Activated CD4-positive, alpha-beta T cell treated with anti-CD3 and anti-CD28 coated beads, Interleukin-2, amount 10 ng/mL, durations not matched to agents 24 days and 14 days (primary cell): ENCODE measurements at regions of chr15 and their contacts with region 1.

Region 1: GRCh38 chr15:64841258-64842095 is at the start of gene PLEKHO2:
- DNase-seq: peak; percentile 97
- H3K4me3 Mint-ChIP-seq: peak within 1 kb of the TSS; percentile 88
- H3K27ac Mint-ChIP-seq: peak within 1 kb of the TSS; percentile 86
- H3K4me1 Mint-ChIP-seq: peaks cover 63% of the 10 kb centered on the region
- H3K27me3 Mint-ChIP-seq: no peaks in the 10 kb centered on the region
- total RNA-seq, gene PLEKHO2: 15.7 and 16.9 TPM in 2 replicates

Region 2: GRCh38 chr15:64792282-64792681 is 49.2 kb before region 1 on chr15:
- intact Hi-C with region 1: no loop called
- DNase-seq: no peak
- H3K4me3 Mint-ChIP-seq: no peak overlapping the region
- H3K27ac Mint-ChIP-seq: no peak overlapping the region
- H3K4me1 Mint-ChIP-seq: no peaks in the 10 kb centered on the region
- H3K27me3 Mint-ChIP-seq: no peaks in the 10 kb centered on the region

Region 3: GRCh38 chr15:64825431-64826294 is 15.8 kb before region 1 on chr15 and contains the start of gene PIF1:
- intact Hi-C with region 1: loop called (anchors 2 kb)
- DNase-seq: peak; percentile 98
- H3K4me3 Mint-ChIP-seq: peak within 1 kb of the TSS; percentile 92
- H3K27ac Mint-ChIP-seq: peak within 1 kb of the TSS; percentile 93
- H3K4me1 Mint-ChIP-seq: peaks cover 37% of the 10 kb centered on the region
- H3K27me3 Mint-ChIP-seq: no peaks in the 10 kb centered on the region
- total RNA-seq, gene PIF1: 20.9 and 22.6 TPM in 2 replicates

Region 4: DNA sequence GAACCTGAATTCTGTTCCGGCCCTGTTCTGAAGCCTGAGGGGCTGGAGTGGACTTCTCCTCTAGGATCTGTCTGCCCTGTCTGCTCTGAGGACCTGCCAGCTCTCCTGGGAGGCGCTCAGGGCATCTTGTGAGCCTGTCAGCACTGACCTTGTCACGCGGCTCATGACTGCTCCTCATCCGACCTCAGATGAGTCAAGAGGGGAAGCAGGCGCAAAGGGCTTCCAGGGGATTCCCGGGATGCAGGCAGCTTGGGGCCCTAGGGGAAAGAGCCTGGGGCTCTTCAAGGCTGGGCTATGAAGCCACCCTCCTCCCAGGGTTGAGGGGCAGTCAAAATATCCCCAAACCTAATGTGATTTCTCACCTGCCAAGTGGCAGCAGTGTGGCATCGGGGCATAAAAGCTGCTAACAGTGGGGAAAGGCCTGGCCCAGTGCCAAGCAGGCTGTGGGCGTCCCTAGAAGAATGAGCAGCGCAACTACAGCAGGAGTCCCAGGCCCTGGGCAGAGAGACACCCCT is 42.6 kb after region 1 on chr15:
- intact Hi-C with region 1: loop called (anchors 2 kb)
- DNase-seq: peak; percentile 82
- H3K4me3 Mint-ChIP-seq: peak overlapping the region; percentile 80
- H3K27ac Mint-ChIP-seq: peak overlapping the region; percentile 93
- H3K4me1 Mint-ChIP-seq: peaks cover 27% of the 10 kb centered on the region
- H3K27me3 Mint-ChIP-seq: no peaks in the 10 kb centered on the region

Region 5: DNA sequence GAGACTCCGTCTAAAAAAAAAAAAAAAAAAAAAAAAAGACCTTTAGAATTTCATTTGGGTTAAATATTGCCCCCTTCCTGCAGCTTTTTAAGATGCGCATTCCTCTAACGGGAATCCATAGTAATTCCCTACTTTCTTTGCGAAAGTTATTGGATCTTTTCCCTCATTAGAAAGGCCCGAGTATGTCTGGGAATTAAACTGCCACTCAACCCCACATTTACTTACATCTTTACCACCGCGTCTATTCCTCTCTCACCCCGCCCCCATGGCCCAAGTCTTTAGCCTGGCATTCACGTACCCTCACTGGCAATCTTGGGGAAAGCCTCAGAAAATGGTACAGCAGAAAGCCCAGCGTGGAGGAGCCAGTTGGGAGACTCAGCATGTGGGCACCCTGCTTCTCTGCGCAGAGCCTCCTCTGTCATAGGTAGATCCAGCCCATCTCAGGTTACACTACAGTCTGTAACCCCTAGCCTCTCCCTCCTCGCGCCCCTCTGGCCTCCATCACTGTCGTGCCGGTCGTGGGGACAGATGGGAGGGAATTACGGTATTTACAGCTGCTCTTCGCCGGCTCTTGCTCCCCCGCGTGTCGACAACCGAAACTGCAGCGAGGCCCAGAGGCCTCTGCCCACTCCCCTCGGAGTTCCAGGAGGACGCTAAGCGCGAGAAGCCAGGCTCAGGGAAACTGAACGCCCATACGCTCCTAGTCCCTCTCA is 63.8 kb after region 1 on chr15:
- intact Hi-C with region 1: loop called (anchors 2 kb)
- DNase-seq: peak; percentile 95
- H3K4me3 Mint-ChIP-seq: peak overlapping the region; percentile 80
- H3K27ac Mint-ChIP-seq: peak overlapping the region; percentile 74
- H3K4me1 Mint-ChIP-seq: peaks cover 32% of the 10 kb centered on the region
- H3K27me3 Mint-ChIP-seq: peaks cover 14% of the 10 kb centered on the region

Region 6: GRCh38 chr15:64961013-64961412 is 119.5 kb after region 1 on chr15:
- intact Hi-C with region 1: no loop called
- DNase-seq: peak; percentile 45
- H3K4me3 Mint-ChIP-seq: no peak overlapping the region
- H3K27ac Mint-ChIP-seq: no peak overlapping the region
- H3K4me1 Mint-ChIP-seq: no peaks in the 10 kb centered on the region
- H3K27me3 Mint-ChIP-seq: no peaks in the 10 kb centered on the region

Region 7: DNA sequence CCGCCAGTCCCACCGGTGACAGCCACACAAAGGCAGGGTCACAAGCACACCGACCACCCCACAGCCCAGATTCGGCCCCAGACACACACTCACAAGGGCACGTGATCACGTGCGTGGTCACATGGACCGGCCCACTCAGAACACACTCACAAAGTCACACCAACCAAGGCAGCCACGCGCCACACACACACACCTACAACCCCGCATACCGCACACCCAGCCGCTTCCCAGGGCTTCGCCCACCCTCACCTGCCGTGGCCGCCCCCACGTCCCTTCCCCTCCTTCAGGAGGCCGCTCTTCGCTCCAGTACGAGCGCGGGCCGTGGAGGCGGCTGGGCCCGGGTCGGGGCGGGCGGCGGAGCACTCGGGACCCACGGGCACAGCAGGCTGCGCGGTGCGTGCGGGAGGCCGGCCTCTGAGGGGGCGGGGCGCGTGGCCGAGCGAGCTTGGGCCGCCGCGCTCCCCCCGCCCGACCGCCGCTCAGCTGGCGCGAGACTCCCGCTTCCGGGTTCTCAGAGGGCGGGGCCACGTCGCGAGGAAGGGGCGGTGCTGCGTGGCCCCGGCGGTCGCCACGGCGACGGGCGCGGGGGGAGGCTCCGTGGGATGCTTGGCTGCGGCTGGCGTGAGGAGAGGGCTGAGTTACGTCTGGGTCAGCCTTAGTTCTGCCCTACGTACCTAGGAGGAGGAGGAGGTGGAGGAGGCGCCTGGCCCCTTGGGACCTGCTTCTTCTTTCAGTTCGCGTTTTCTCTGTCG is 148.1 kb after region 1 on chr15 and contains the start of gene SPG21:
- intact Hi-C with region 1: loop called (anchors 10 kb)
- DNase-seq: peak; percentile 98
- H3K4me3 Mint-ChIP-seq: peak within 1 kb of the TSS; percentile 94
- H3K27ac Mint-ChIP-seq: peak within 1 kb of the TSS; percentile 89
- H3K4me1 Mint-ChIP-seq: peaks cover 42% of the 10 kb centered on the region
- H3K27me3 Mint-ChIP-seq: no peaks in the 10 kb centered on the region
- total RNA-seq, gene SPG21: 70.4 and 76.2 TPM in 2 replicates

Region 8: GRCh38 chr15:65184868-65185738 is 343.6 kb after region 1 on chr15 and contains the start of gene CLPX:
- intact Hi-C with region 1: loop called (anchors 10 kb)
- DNase-seq: peak; percentile 97
- H3K4me3 Mint-ChIP-seq: peak within 1 kb of the TSS; percentile 94
- H3K27ac Mint-ChIP-seq: peak within 1 kb of the TSS; percentile 91
- H3K4me1 Mint-ChIP-seq: peaks cover 22% of the 10 kb centered on the region
- H3K27me3 Mint-ChIP-seq: peaks cover 1% of the 10 kb centered on the region
- total RNA-seq, gene CLPX: 62.8 and 63.5 TPM in 2 replicates